CD4-positive, alpha-beta memory T cell (primary cell): ENCODE measurements at regions of chr11 and their contacts with region 1.

Region 1: GRCh38 chr11:111878849-111879636 is at the starts of genes CFAP68 and FDXACB1:
- DNase-seq: peak; percentile 97 to 99 (median 98)
- H3K4me3 ChIP-seq: peak within 1 kb of the TSS; percentile 79 to 80
- H3K4me3 Mint-ChIP-seq: peak within 1 kb of the TSS; percentile 91 to 98 (median 95)
- H3K27ac ChIP-seq: peak within 1 kb of the TSS; percentile 95
- H3K27ac Mint-ChIP-seq: peak within 1 kb of the TSS; percentile 93 to 100 (median 100)
- H3K4me1 ChIP-seq: peaks cover 18% of the 10 kb centered on the region
- H3K4me1 Mint-ChIP-seq: peaks cover 11 to 28% (median 17%) of the 10 kb centered on the region in 4 donors
- H3K27me3 ChIP-seq: no peaks in the 10 kb centered on the region
- H3K27me3 Mint-ChIP-seq: no peaks in the 10 kb centered on the region
- total RNA-seq, gene CFAP68: 14.8 to 18.7 TPM
- total RNA-seq, gene FDXACB1: 3.9 to 4.0 TPM

Region 2: DNA sequence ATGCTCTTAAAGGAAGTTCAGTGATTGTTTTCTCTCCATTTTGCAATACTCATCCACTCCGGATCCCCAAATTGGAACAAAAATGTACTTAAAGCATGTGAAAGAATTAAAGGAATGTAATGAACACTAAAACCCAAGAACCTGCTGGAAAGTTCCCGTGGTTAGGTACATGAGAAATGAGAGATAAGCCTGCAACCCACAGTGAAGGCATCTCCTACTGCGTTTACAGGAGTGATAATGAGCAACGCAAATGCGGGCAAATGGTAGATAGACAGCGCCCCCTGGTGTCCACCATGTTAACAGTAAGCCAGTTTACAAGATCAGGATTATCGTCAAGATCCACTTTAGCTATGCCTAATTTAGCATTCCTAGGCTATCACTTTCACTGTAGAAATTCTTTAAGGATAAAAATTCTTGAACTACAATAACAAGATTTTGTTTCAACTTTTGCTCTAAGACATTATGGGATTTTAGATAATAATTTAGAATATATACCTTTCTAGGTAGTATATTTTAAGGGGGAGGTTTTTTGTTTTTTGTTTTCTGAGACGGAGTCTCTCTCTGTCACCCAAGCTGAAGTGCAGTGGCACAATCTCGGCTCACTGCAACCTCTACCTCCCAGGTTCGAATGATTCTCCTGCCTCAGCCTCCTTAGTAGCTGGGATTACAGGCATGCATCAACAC is 37.5 kb before region 1 on chr11:
- CTCF ChIA-PET with region 1: no interaction called
- POLR2A ChIA-PET with region 1: no interaction called
- intact Hi-C with region 1: no loop called
- DNase-seq: peak; percentile 69 to 81 (median 72)
- H3K4me3 ChIP-seq: no peak overlapping the region
- H3K4me3 Mint-ChIP-seq: no peak overlapping the region
- H3K27ac ChIP-seq: no peak overlapping the region
- H3K27ac Mint-ChIP-seq: peak overlapping the region in 1 of 7 donors; percentile 25
- H3K4me1 ChIP-seq: peaks cover 5% of the 10 kb centered on the region
- H3K4me1 Mint-ChIP-seq: peaks cover 2 to 6% (median 4%) of the 10 kb centered on the region in 4 donors
- H3K27me3 ChIP-seq: no peaks in the 10 kb centered on the region
- H3K27me3 Mint-ChIP-seq: no peaks in the 10 kb centered on the region

Region 3: DNA sequence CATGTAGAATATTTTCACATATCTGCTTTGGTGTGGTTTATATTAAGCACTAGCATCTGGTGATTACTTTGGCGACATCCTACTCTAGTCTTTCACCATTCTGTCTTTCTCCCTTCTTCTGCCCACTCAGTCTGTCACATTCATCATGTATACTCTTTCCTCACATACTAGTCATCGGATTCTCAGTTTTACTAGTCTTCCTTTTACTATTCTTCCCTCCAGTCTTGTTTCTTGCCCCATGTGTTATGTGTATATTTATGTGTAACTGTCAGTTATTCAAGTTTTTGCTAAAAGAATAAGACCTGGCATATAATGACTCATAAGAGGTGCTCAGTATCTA is 53.5 kb after region 1 on chr11:
- CTCF ChIA-PET with region 1: interaction called, 19 read pairs
- POLR2A ChIA-PET with region 1: interaction called, 20 read pairs
- intact Hi-C with region 1: no loop called
- DNase-seq: no peak
- H3K4me3 ChIP-seq: no peak overlapping the region
- H3K4me3 Mint-ChIP-seq: peak overlapping the region in 5 of 8 donors; percentile 1 to 46 (median 32)
- H3K27ac ChIP-seq: no peak overlapping the region
- H3K27ac Mint-ChIP-seq: peak overlapping the region in 1 of 7 donors; percentile 38
- H3K4me1 ChIP-seq: peaks cover 25% of the 10 kb centered on the region
- H3K4me1 Mint-ChIP-seq: peaks cover 10 to 26% (median 14%) of the 10 kb centered on the region in 4 donors
- H3K27me3 ChIP-seq: no peaks in the 10 kb centered on the region
- H3K27me3 Mint-ChIP-seq: peaks cover 3 to 4% of the 10 kb centered on the region in 2 donors

Region 4: GRCh38 chr11:112024773-112025678 is 146.0 kb after region 1 on chr11 and contains the start of gene DLAT:
- CTCF ChIA-PET with region 1: no interaction called
- POLR2A ChIA-PET with region 1: interaction called, 3 read pairs
- intact Hi-C with region 1: loop called (anchors 2 kb)
- DNase-seq: peak; percentile 85 to 89 (median 86)
- H3K4me3 ChIP-seq: peak within 1 kb of the TSS; percentile 99 to 100
- H3K4me3 Mint-ChIP-seq: peak within 1 kb of the TSS; percentile 97 to 100 (median 100)
- H3K27ac ChIP-seq: peak within 1 kb of the TSS; percentile 78
- H3K27ac Mint-ChIP-seq: peak within 1 kb of the TSS; percentile 92 to 100 (median 99)
- H3K4me1 ChIP-seq: peaks cover 15% of the 10 kb centered on the region
- H3K4me1 Mint-ChIP-seq: peaks cover 13 to 41% (median 27%) of the 10 kb centered on the region in 4 donors
- H3K27me3 ChIP-seq: no peaks in the 10 kb centered on the region
- H3K27me3 Mint-ChIP-seq: no peaks in the 10 kb centered on the region
- total RNA-seq, gene DLAT: 19.4 to 21.6 TPM

Region 5: DNA sequence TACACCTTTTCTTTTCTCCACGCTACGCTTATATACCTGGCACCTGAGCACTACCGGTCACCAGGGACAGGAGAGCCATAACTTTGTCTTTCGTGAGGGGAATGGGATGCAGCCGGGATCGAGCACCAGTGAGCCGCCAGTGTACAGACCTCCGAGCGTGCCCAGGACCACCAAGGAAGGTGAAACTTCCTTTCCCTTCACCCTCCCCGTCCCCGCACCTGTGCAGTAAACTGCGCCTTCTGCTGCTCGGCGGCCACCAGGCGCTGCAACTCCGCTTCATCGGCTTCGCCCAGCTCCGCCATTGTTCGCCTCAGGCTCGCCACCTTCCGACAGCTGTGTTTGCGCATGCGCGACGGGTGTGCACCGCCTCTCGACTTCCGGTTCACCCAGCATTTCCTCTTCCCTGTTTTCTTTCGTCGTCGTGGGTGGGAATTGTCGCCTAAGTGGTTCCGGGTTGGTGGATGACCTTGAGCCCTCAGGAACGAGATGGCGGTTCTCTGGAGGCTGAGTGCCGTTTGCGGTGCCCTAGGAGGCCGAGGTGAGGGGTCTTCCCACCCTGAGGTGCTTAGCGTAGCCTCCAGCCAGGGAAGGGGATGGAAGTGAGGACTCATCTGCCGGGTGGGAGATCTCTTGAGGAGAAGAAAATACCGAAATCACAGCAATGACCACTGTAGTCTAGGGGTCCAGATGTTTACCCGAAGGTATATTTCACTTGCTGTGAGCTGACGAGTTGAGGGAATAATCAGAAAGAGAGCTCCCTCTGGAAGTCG is 207.6 kb after region 1 on chr11 and contains the starts of genes SDHD and TIMM8B:
- CTCF ChIA-PET with region 1: no interaction called
- POLR2A ChIA-PET with region 1: interaction called, 5 read pairs
- intact Hi-C with region 1: loop called (anchors 1 kb)
- DNase-seq: peak; percentile 96 to 98 (median 97)
- H3K4me3 ChIP-seq: peak within 1 kb of the TSS; percentile 97 to 100
- H3K4me3 Mint-ChIP-seq: peak within 1 kb of the TSS; percentile 93 to 100 (median 99)
- H3K27ac ChIP-seq: peak within 1 kb of the TSS; percentile 79
- H3K27ac Mint-ChIP-seq: peak within 1 kb of the TSS; percentile 91 to 100 (median 99)
- H3K4me1 ChIP-seq: peaks cover 39% of the 10 kb centered on the region
- H3K4me1 Mint-ChIP-seq: peaks cover 41 to 62% (median 49%) of the 10 kb centered on the region in 4 donors
- H3K27me3 ChIP-seq: no peaks in the 10 kb centered on the region
- H3K27me3 Mint-ChIP-seq: no peaks in the 10 kb centered on the region
- total RNA-seq, gene SDHD: 61.2 to 65.5 TPM
- total RNA-seq, gene TIMM8B: 26.2 to 28.0 TPM

Region 6: GRCh38 chr11:113314389-113315301 is 1435.6 kb after region 1 on chr11 and contains the start of gene TTC12:
- CTCF ChIA-PET with region 1: no interaction called
- POLR2A ChIA-PET with region 1: no interaction called
- intact Hi-C with region 1: loop called (anchors 10 kb)
- DNase-seq: peak; percentile 87 to 91 (median 89)
- H3K4me3 ChIP-seq: peak within 1 kb of the TSS; percentile 24 to 84
- H3K4me3 Mint-ChIP-seq: peak within 1 kb of the TSS; percentile 79 to 91 (median 88)
- H3K27ac ChIP-seq: peak within 1 kb of the TSS; percentile 85
- H3K27ac Mint-ChIP-seq: peak within 1 kb of the TSS; percentile 79 to 95 (median 94)
- H3K4me1 ChIP-seq: peaks cover 20% of the 10 kb centered on the region
- H3K4me1 Mint-ChIP-seq: peaks cover 27 to 52% (median 38%) of the 10 kb centered on the region in 4 donors
- H3K27me3 ChIP-seq: no peaks in the 10 kb centered on the region
- H3K27me3 Mint-ChIP-seq: no peaks in the 10 kb centered on the region
- total RNA-seq, gene TTC12: 69.2 to 75.1 TPM